ENCODE measurements at regions of chr3 and their contacts with region 1.

Region 1: DNA sequence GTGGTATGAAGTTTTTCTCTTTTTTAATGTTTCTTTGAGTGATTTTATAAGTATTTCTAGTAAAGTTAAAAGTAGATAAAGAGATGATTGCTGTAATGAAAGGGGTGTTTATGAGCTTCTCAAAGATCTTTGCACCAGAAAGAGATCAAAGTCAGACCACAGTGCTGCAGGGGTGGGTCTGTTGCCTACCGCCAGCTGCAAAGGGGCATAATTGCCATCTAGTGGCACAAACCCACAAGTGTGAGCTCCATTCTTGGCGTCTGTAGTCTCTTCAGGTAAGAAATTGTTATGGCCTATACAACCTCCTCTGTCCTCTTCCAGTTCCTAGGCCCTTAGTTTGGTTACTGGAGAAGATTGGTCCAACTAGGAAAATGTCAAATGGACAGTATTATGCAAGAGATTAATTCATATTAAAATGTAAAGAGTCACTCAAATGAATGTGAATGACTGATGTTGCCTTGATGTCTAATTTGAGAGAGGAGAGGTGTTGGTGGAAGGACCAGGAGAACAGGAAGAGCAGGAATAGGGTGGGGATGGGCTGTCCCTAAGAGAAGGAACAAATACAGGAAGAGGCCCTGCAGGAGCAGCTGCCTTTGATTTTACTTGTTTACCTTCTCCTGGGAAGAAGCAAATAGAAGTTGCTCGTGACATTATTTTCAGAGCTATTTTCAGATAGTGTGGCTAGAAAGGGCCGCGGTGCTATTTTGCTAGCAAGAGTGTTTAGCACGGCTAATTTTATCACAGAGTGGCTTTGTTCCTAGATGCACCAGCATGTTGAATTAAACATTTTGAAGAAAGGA is 53.0 kb upstream of the GSK3B start:
- DNase-seq: peak; percentile 20 to 80 (median 50)
- ATAC-seq: peak; percentile 95
- H3K4me3 ChIP-seq: no peak overlapping the region
- H3K4me3 Mint-ChIP-seq: no peak overlapping the region
- H3K27ac ChIP-seq: no peak overlapping the region
- H3K27ac Mint-ChIP-seq: no peak overlapping the region
- H3K4me1 ChIP-seq: no peaks in the 10 kb centered on the region
- H3K4me1 Mint-ChIP-seq: peaks cover 17% of the 10 kb centered on the region
- H3K27me3 ChIP-seq: no peaks in the 10 kb centered on the region
- H3K27me3 Mint-ChIP-seq: no peaks in the 10 kb centered on the region
- CTCF ChIP-seq: peak; percentile 69

Region 2: GRCh38 chr3:119819806-119820205 is 327.5 kb before region 1 on chr3:
- CTCF ChIA-PET with region 1: no interaction called
- POLR2A ChIA-PET with region 1: interaction called, 6 read pairs
- intact Hi-C with region 1: loop called in 1 of 2 experiments (anchors 5 kb)
- DNase-seq: no peak
- ATAC-seq: no peak
- H3K4me3 ChIP-seq: no peak overlapping the region
- H3K4me3 Mint-ChIP-seq: no peak overlapping the region
- H3K27ac ChIP-seq: no peak overlapping the region
- H3K27ac Mint-ChIP-seq: no peak overlapping the region
- H3K4me1 ChIP-seq: no peaks in the 10 kb centered on the region
- H3K4me1 Mint-ChIP-seq: peaks cover 9% of the 10 kb centered on the region
- H3K27me3 ChIP-seq: no peaks in the 10 kb centered on the region
- H3K27me3 Mint-ChIP-seq: peaks cover 3% of the 10 kb centered on the region
- CTCF ChIP-seq: no peak

Region 3: DNA sequence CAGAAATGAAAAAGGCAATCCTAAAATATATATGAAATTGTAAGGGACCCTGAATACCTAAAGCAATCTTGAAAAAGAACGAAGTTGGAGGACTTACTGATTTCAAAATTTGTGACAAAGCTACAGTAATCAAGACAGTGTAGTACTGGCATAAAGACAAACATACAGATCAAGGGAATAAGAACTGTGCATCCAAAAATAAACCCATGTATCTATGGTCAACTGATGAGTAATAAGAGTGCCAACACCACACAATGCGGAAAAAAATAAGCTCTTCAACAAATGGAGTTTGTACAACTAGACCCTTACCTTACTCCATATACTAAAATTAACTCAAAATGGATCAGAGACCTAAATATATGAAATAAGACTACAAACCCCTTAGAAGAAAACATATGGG is 82.6 kb before region 1 on chr3:
- CTCF ChIA-PET with region 1: no interaction called
- POLR2A ChIA-PET with region 1: no interaction called
- intact Hi-C with region 1: no loop called
- DNase-seq: no peak
- ATAC-seq: no peak
- H3K4me3 ChIP-seq: no peak overlapping the region
- H3K4me3 Mint-ChIP-seq: no peak overlapping the region
- H3K27ac ChIP-seq: no peak overlapping the region
- H3K27ac Mint-ChIP-seq: no peak overlapping the region
- H3K4me1 ChIP-seq: peaks cover 9% of the 10 kb centered on the region
- H3K4me1 Mint-ChIP-seq: peaks cover 68% of the 10 kb centered on the region
- H3K27me3 ChIP-seq: no peaks in the 10 kb centered on the region
- H3K27me3 Mint-ChIP-seq: no peaks in the 10 kb centered on the region
- CTCF ChIP-seq: no peak

Region 4: DNA sequence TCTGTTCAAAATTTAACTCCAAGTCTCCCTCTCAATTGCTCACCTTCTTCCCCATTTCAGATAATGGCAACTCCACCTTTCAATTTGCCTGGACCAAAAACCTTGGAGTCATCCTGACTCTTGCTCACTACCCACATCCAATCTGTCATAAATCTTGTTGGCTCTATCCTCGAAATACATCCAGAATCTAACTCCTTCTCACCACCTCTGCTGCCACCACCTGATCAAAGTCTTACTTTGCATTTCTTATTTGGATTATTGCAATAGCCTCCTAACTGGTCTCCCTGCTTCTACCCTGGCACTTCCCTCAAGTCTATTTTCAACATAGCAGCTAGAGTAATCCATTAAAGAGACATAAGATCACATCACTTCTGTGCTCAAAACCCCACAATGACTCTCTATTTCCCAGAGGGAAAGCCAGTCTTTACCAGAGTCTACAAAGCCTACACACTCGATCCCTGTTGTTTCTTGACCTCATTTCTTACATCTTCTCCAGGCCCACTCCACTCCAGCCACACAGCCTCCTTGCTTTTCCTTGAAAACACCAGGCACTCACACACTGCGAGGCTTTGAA is 51.1 kb after region 1 on chr3:
- CTCF ChIA-PET with region 1: no interaction called
- POLR2A ChIA-PET with region 1: no interaction called
- intact Hi-C with region 1: no loop called
- DNase-seq: peak in 3 of 14 experiments; percentile 3 to 18 (median 15)
- ATAC-seq: no peak
- H3K4me3 ChIP-seq: no peak overlapping the region
- H3K4me3 Mint-ChIP-seq: no peak overlapping the region
- H3K27ac ChIP-seq: no peak overlapping the region
- H3K27ac Mint-ChIP-seq: no peak overlapping the region
- H3K4me1 ChIP-seq: no peaks in the 10 kb centered on the region
- H3K4me1 Mint-ChIP-seq: no peaks in the 10 kb centered on the region
- H3K27me3 ChIP-seq: no peaks in the 10 kb centered on the region
- H3K27me3 Mint-ChIP-seq: no peaks in the 10 kb centered on the region
- CTCF ChIP-seq: no peak

Measured in CD4-positive, alpha-beta T cell (primary cell).